Testis (tissue), 5 donors: ENCODE measurements at regions of chr20 and their contacts with region 1.

Region 1: GRCh38 chr20:49534255-49534712 is 33.7 kb downstream of the PTGIS start:
- DNase-seq: peak; percentile 74
- H3K4me3 ChIP-seq: no peak overlapping the region
- H3K27ac ChIP-seq: no peak overlapping the region
- H3K4me1 ChIP-seq: no peaks in the 10 kb centered on the region
- H3K27me3 ChIP-seq: no peaks in the 10 kb centered on the region
- CTCF ChIP-seq: peak; percentile 73 to 74 (median 74)
- POLR2A ChIP-seq: no peak

Region 2: DNA sequence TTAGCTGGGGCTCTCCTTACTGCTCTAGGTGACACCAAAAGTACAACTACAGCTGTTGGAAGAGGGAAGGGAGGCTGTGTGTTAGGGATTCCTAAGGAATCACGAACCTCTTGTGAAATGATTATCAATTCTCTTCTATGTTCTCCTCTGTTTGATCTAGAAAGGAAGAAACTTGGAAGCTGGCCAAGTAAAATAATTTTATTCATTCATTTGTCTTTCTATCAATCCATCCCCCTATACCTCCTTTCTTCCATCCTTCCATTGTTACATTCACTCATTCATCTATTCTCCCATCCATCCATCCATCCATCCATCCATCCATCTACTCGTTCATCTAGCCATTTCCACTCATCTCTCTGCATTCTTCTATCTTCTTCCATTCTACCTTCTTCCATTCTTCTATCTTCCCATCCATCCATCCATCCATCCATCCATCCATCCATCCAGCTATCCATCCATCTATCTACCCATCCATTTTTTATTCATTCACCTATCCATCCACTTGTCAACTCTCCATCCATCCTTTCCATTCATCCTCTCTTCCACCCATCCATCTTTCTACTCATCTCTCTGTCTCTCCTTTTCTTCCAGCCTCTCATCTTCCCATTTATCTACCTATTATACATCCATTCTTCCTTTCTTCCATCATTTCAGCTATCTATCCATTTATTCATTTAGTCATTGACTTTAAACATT is 203.6 kb before region 1 on chr20:
- intact Hi-C with region 1: loop called (anchors 5 kb)
- DNase-seq: no peak
- H3K4me3 ChIP-seq: no peak overlapping the region
- H3K27ac ChIP-seq: no peak overlapping the region
- H3K4me1 ChIP-seq: no peaks in the 10 kb centered on the region
- H3K27me3 ChIP-seq: no peaks in the 10 kb centered on the region
- CTCF ChIP-seq: no peak
- POLR2A ChIP-seq: no peak

Region 3: GRCh38 chr20:49344975-49345374 is 189.3 kb before region 1 on chr20:
- intact Hi-C with region 1: no loop called
- DNase-seq: no peak
- H3K4me3 ChIP-seq: no peak overlapping the region
- H3K27ac ChIP-seq: no peak overlapping the region
- H3K4me1 ChIP-seq: no peaks in the 10 kb centered on the region
- H3K27me3 ChIP-seq: no peaks in the 10 kb centered on the region
- CTCF ChIP-seq: no peak
- POLR2A ChIP-seq: no peak

Region 4: DNA sequence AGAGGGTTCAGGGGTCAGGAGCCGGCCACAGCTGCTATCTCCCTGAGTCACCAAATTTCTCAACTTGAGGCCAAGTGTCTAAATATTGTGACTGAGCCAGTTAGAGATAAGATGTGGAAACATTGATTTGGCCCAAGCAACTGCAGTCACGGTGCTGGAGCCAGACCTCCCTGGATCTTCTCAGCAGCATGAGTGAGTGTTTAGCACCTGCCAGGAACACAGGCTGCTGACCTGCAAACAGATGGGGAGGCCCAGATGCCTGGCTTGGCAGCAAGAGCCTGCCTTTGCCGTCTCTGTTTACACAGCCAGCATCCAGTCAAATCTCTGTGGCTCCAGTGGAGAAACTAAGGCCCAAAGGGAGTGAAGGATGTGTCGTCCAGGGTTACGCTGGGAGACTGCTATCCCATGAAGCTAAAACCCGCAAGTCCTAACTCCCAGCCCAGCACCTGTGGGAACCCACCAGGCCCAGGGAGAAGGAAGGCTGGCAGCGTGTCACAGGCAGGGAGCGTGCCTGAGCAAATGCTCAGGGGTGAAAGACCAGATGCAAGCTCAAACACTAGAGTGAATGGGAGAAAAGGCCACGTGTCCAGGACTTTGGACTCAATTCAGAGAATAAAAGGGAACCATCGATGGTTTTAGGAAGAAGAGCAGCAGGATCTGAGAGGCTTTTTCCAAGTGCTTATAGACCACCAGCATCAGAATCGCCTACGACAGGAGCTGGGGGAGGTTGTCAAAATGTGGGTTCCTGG is 49.6 kb after region 1 on chr20:
- intact Hi-C with region 1: no loop called
- DNase-seq: peak; percentile 81
- H3K4me3 ChIP-seq: no peak overlapping the region
- H3K27ac ChIP-seq: peak overlapping the region; percentile 62 to 76
- H3K4me1 ChIP-seq: peaks cover 52% of the 10 kb centered on the region
- H3K27me3 ChIP-seq: no peaks in the 10 kb centered on the region
- CTCF ChIP-seq: no peak
- POLR2A ChIP-seq: no peak

Region 5: DNA sequence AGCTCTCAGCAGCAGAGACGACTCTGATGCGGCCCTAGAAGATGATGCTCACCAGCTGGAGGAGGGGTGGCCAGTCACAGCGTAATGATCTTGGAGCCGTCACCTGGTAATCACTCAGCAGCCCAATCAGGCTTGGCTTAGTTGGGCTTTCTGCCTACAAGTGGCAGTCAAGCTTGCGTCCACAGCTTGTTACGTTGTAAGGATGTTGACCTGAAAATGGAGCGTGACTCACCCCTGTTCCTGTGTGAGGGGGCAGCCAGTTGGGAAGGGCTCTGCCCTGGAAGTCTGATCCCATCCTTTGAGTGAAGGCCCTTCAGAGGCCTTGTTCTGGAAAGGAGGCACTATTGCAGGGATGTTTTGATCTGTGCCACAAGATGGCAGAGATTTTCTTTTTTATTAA is 331.3 kb after region 1 on chr20:
- intact Hi-C with region 1: no loop called
- DNase-seq: no peak
- H3K4me3 ChIP-seq: no peak overlapping the region
- H3K27ac ChIP-seq: no peak overlapping the region
- H3K4me1 ChIP-seq: no peaks in the 10 kb centered on the region
- H3K27me3 ChIP-seq: no peaks in the 10 kb centered on the region
- CTCF ChIP-seq: no peak
- POLR2A ChIP-seq: no peak